ENCODE measurements at regions of chr4 and their contacts with region 1.

Region 1: GRCh38 chr4:151117371-151117962 is 18.0 kb downstream of the RPS3A start:
- ATAC-seq: peak; percentile 49 to 66 (median 62)
- H3K4me3 ChIP-seq: no peak overlapping the region
- H3K27ac ChIP-seq: no peak overlapping the region
- H3K4me1 ChIP-seq: no peaks in the 10 kb centered on the region

Region 2: GRCh38 chr4:150108691-150109090 is 1008.8 kb before region 1 on chr4:
- in situ Hi-C with region 1: no loop called
- ATAC-seq: no peak
- H3K4me3 ChIP-seq: no peak overlapping the region
- H3K27ac ChIP-seq: no peak overlapping the region
- H3K4me1 ChIP-seq: no peaks in the 10 kb centered on the region

Region 3: DNA sequence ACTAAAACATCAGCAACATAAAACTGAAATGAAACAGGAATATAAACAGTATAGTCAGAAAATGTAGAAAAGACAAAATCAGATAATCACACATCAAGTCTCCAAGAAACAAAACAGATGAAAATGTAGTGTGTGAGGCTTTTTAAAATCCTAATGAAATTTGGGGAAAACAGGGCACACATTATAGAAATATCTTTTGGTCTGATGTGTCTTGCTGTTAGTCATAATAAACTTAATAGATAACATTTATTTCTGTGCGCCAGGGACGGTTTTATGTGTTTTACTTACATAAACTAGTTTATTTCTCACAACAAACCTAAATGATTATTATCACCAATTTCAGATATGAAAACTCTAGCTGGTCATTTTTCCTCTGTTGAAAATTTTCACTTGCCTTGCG is 937.3 kb after region 1 on chr4:
- in situ Hi-C with region 1: no loop called
- ATAC-seq: no peak
- H3K4me3 ChIP-seq: no peak overlapping the region
- H3K27ac ChIP-seq: no peak overlapping the region
- H3K4me1 ChIP-seq: no peaks in the 10 kb centered on the region

Region 4: DNA sequence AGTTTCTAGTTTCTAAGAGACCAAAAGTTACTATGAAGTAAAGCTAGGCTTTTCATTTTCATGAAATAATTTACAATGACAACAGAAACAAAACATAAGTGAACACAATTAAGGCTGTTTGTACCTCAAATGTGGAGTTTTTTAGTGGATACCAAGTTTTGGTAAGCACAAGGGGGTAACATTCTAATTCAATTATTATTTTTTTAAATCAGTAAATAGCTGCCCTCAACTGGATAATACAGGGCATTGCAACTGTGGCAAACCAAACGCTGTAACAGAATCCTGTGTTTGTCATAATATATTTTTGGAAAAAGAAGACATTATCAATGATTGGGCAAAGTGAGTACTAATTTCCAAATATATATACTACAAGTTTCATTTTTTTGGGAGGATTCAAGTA is 1268.1 kb after region 1 on chr4:
- in situ Hi-C with region 1: loop called in 1 of 9 experiments (anchors 25 kb)
- ATAC-seq: peak in 2 of 8 experiments; percentile 38 to 66
- H3K4me3 ChIP-seq: no peak overlapping the region
- H3K27ac ChIP-seq: no peak overlapping the region
- H3K4me1 ChIP-seq: no peaks in the 10 kb centered on the region